PC-3 (cell line): ENCODE measurements at regions of chr7 and their contacts with region 1.

Region 1: DNA sequence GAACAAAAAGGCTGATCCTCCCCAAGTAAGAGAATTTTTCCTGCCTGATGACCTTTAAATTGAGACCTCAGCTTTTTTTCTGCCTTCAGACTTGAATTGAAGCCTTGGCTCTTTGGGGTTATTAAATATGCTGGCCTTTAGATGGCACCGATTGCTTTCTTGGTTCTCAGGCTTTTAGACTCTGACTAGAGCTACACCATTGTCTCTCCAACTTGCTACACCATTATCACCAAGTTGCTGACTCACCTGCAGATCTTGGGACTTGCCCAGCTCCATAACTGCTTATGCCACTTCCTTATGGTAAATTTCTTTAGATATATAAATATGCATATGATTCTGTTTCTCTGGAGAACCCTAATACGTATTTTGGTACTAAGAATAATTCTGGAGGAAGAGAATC is 3.1 kb upstream of the ABCA13 start:
- DNase-seq: peak; percentile 67
- ATAC-seq: peak; percentile 94
- H3K4me3 ChIP-seq: no peak overlapping the region
- H3K27ac ChIP-seq: no peak overlapping the region
- H3K4me1 ChIP-seq: peaks cover 4% of the 10 kb centered on the region
- H3K27me3 ChIP-seq: no peaks in the 10 kb centered on the region
- CTCF ChIP-seq: peak; percentile 44

Region 2: GRCh38 chr7:48213226-48213625 is 45.1 kb after region 1 on chr7:
- CTCF ChIA-PET with region 1: interaction called, 9 read pairs
- POLR2A ChIA-PET with region 1: no interaction called
- intact Hi-C with region 1: loop called (anchors 1 kb)
- DNase-seq: peak; percentile 82
- ATAC-seq: peak; percentile 95
- H3K4me3 ChIP-seq: no peak overlapping the region
- H3K27ac ChIP-seq: peak overlapping the region; percentile 69
- H3K4me1 ChIP-seq: peaks cover 26% of the 10 kb centered on the region
- H3K27me3 ChIP-seq: no peaks in the 10 kb centered on the region
- CTCF ChIP-seq: no peak

Region 3: GRCh38 chr7:48274662-48275061 is 106.5 kb after region 1 on chr7:
- CTCF ChIA-PET with region 1: no interaction called
- POLR2A ChIA-PET with region 1: no interaction called
- intact Hi-C with region 1: loop called (anchors 1 kb)
- DNase-seq: peak; percentile 22
- ATAC-seq: peak; percentile 63
- H3K4me3 ChIP-seq: no peak overlapping the region
- H3K27ac ChIP-seq: no peak overlapping the region
- H3K4me1 ChIP-seq: peaks cover 24% of the 10 kb centered on the region
- H3K27me3 ChIP-seq: no peaks in the 10 kb centered on the region
- CTCF ChIP-seq: no peak

Region 4: DNA sequence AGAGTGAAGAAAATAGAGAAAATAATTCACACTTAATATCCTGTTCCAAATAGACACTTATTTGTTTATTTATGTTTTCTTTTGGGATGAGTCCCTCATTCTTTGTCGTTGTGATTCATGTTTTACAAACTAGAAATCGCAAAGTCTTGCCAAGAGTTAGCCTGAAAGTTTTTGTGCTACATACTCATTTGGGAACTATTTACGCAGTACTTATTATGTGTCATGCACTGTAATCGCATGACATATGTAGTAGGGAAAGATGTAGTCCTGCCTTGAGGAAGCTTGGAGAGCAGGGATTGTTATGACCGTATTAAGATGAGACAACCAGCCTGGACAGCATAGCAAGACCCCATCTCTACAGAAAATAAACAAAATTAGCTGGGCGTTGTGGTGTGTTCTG is 192.4 kb after region 1 on chr7:
- CTCF ChIA-PET with region 1: no interaction called
- POLR2A ChIA-PET with region 1: no interaction called
- intact Hi-C with region 1: loop called (anchors 10 kb)
- DNase-seq: peak; percentile 82
- ATAC-seq: peak; percentile 62
- H3K4me3 ChIP-seq: no peak overlapping the region
- H3K27ac ChIP-seq: peak overlapping the region; percentile 43
- H3K4me1 ChIP-seq: peaks cover 30% of the 10 kb centered on the region
- H3K27me3 ChIP-seq: no peaks in the 10 kb centered on the region
- CTCF ChIP-seq: no peak

Region 5: DNA sequence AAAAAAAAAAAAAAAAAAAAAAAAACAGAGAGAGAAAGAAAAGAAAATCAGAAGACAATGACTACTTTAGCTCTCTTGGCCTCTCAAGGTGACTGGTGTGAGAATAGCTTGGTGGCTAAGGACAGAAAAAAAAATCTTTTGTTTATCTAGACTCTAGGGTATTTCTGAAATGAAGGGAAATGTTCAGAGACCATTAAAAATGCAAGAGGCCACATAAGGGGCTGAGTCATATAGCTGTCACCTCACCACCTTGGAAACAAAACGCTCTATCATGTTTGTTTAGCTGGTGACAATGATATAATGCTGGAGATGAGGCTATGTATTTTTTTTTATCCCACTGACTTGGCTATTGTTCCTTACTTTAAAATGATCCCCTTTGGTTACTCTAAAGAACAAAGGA is 469.2 kb after region 1 on chr7:
- CTCF ChIA-PET with region 1: interaction called, 3 read pairs
- POLR2A ChIA-PET with region 1: no interaction called
- intact Hi-C with region 1: loop called (anchors 10 kb)
- DNase-seq: peak; percentile 86
- ATAC-seq: peak; percentile 91
- H3K4me3 ChIP-seq: no peak overlapping the region
- H3K27ac ChIP-seq: peak overlapping the region; percentile 56
- H3K4me1 ChIP-seq: peaks cover 21% of the 10 kb centered on the region
- H3K27me3 ChIP-seq: no peaks in the 10 kb centered on the region
- CTCF ChIP-seq: no peak

Region 6: GRCh38 chr7:48728799-48729198 is 560.6 kb after region 1 on chr7:
- CTCF ChIA-PET with region 1: no interaction called
- POLR2A ChIA-PET with region 1: no interaction called
- intact Hi-C with region 1: no loop called
- DNase-seq: no peak
- ATAC-seq: no peak
- H3K4me3 ChIP-seq: no peak overlapping the region
- H3K27ac ChIP-seq: no peak overlapping the region
- H3K4me1 ChIP-seq: no peaks in the 10 kb centered on the region
- H3K27me3 ChIP-seq: no peaks in the 10 kb centered on the region
- CTCF ChIP-seq: no peak

Region 7: DNA sequence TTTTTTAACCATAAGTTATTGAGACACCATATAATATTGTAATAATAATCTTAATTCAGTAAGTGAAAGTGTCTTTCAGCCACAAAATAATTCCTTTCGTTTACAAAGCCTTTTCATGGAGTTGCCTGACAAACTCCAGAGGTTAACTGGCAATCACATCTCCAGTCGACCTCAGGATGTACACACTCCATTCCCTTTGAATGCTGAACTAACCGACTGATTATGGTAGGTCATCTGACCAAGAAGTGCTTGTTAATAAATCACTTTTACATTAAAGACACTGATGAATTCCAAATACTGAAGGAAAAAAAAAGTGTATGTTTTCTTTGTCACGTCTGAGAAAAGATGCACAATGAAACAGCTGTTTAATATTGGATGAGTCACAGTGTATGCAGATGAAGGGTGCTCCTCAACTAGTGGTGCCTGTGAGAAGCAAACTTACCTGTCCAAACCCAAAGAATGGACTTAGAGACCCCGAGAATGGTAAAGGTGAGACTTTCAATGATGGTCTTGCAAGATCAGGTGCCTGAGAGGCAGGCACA is 1257.2 kb after region 1 on chr7:
- CTCF ChIA-PET with region 1: no interaction called
- POLR2A ChIA-PET with region 1: no interaction called
- intact Hi-C with region 1: loop called (anchors 5 kb)
- DNase-seq: peak; percentile 46
- ATAC-seq: peak; percentile 39
- H3K4me3 ChIP-seq: no peak overlapping the region
- H3K27ac ChIP-seq: peak overlapping the region; percentile 92
- H3K4me1 ChIP-seq: peaks cover 44% of the 10 kb centered on the region
- H3K27me3 ChIP-seq: no peaks in the 10 kb centered on the region
- CTCF ChIP-seq: no peak